Mammary epithelial cell (primary cell): ENCODE measurements at regions of chr1 and their contacts with region 1.

Region 1: DNA sequence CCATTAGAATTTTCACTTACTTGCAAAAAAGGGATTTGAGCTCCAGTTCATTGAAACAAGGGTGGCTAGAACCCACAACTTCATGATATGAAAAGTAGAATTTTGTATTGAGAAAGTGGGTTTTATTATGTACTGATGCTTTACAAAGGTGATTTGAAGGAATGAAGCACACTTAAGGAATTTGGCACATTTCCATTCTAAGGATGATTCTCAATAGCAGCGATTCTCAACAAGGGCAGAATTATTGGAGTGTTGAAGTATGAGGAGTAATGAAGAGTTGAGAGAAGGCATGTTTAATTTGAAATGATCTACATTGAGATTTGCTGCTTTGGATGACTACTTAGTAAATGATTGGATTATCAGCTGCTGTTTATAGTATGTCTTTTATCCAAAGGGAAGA is 54.6 kb downstream of the FNBP1L start:
- DNase-seq: peak; percentile 39
- H3K4me3 ChIP-seq: no peak overlapping the region
- H3K27ac ChIP-seq: no peak overlapping the region
- H3K4me1 ChIP-seq: no peaks in the 10 kb centered on the region
- H3K27me3 ChIP-seq: no peaks in the 10 kb centered on the region
- CTCF ChIP-seq: no peak

Region 2: DNA sequence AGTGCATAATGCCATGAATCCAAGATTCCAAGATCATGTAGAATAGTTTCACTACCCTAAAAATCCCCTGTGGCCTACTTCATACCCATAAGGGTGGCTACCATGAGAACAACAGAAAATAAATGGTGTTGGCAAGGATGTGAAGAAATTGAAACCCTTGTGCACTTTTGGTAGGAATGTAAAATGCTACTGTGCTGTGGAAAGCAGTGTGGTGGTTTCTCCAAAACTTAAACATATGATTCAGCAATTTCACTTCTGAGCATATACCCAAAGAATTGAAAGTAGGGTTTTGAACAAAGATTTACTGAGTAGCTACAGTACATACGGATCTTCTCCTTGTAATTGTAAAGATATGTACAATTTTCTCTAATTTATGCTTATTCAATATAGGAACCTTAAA is 38.6 kb before region 1 on chr1:
- CTCF ChIA-PET with region 1: no interaction called
- dilution Hi-C with region 1: loop called (anchors 5 kb)
- in situ Hi-C with region 1: no loop called
- intact Hi-C with region 1: no loop called
- DNase-seq: no peak
- H3K4me3 ChIP-seq: no peak overlapping the region
- H3K27ac ChIP-seq: no peak overlapping the region
- H3K4me1 ChIP-seq: no peaks in the 10 kb centered on the region
- H3K27me3 ChIP-seq: no peaks in the 10 kb centered on the region
- CTCF ChIP-seq: no peak